Adrenal gland (tissue), 19 donors: ENCODE measurements at regions of chr1 and their contacts with region 1.

Region 1: DNA sequence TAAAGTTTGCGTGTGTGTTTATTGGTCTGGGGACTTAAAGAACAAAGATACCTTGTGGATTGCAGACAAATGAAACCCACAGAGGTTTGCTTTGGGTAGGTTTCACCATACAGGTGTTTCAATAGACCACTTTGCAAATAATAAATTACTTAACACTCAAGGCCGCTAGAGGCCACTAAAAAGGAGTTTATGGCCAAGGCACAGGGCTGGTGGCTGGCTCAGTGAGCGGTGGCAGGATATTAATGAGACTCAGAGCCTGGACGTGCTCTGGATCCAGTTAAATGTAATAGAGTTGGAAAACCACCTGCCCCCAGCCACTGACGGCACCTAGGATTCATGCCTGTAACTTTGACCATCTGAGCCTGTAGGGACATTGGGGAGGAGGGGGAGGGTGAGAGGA is 44.5 kb downstream of the LRRC38 start:
- DNase-seq: peak in 6 of 7 donors; percentile 27 to 65 (median 44)
- H3K4me3 ChIP-seq: no peak overlapping the region
- H3K27ac ChIP-seq: no peak overlapping the region
- H3K4me1 ChIP-seq: no peaks in the 10 kb centered on the region
- H3K27me3 ChIP-seq: no peaks in the 10 kb centered on the region
- CTCF ChIP-seq: peak in 4 of 6 experiments; percentile 28 to 43 (median 35)
- POLR2A ChIP-seq: no peak

Region 2: GRCh38 chr1:13543451-13544220 is 74.3 kb after region 1 on chr1:
- intact Hi-C with region 1: loop called in 1 of 2 experiments (anchors 10 kb)
- DNase-seq: peak; percentile 68 to 90 (median 83)
- H3K4me3 ChIP-seq: peak overlapping the region in 1 of 4 donors; percentile 33
- H3K27ac ChIP-seq: peak overlapping the region; percentile 71 to 95 (median 84)
- H3K4me1 ChIP-seq: peaks cover 3 to 13% of the 10 kb centered on the region in 2 donors
- H3K27me3 ChIP-seq: no peaks in the 10 kb centered on the region
- CTCF ChIP-seq: peak; percentile 71 to 86 (median 80)
- POLR2A ChIP-seq: no peak

Region 3: DNA sequence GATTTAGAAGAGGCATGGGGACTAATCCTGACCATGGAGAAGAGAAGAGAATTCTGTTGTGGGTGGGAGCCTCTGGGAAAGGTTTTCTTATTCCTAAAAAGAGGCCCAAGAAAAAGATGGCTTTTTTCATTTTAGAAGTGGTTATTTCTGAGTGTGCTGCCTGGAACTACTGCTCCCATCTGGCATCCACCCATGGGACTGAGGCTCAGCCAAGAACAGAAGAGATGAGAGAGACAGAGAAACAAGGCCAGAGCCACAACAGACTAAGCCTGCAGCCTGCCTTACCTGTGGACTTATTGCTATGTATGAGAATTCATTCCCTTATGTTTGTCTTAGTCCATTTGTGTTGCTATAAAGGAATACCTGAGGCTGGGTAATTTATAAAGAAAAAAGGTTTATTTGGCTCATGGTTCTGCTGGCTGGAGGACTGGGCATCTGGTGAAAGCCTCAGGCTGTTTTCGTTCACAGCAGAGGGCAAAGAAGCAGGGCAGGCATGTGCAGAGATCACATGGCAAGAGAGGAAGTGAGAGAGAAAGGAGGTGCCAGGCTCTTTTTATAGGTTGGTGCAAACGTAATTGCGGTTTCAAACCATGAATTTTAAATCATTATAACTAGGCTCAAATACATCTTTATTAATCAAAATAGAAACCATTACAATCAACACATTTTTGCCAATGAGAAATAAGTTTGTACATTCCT is 173.1 kb after region 1 on chr1:
- intact Hi-C with region 1: no loop called
- DNase-seq: no peak
- H3K4me3 ChIP-seq: no peak overlapping the region
- H3K27ac ChIP-seq: no peak overlapping the region
- H3K4me1 ChIP-seq: no peaks in the 10 kb centered on the region
- H3K27me3 ChIP-seq: no peaks in the 10 kb centered on the region
- CTCF ChIP-seq: no peak
- POLR2A ChIP-seq: no peak

Region 4: GRCh38 chr1:13662493-13662892 is 193.2 kb after region 1 on chr1:
- intact Hi-C with region 1: no loop called
- DNase-seq: peak in 3 of 7 donors; percentile 12 to 33 (median 26)
- H3K4me3 ChIP-seq: no peak overlapping the region
- H3K27ac ChIP-seq: no peak overlapping the region
- H3K4me1 ChIP-seq: no peaks in the 10 kb centered on the region
- H3K27me3 ChIP-seq: no peaks in the 10 kb centered on the region
- CTCF ChIP-seq: no peak
- POLR2A ChIP-seq: no peak

Region 5: GRCh38 chr1:13807213-13807612 is 337.9 kb after region 1 on chr1:
- intact Hi-C with region 1: no loop called
- DNase-seq: peak; percentile 35 to 81 (median 64)
- H3K4me3 ChIP-seq: no peak overlapping the region
- H3K27ac ChIP-seq: no peak overlapping the region
- H3K4me1 ChIP-seq: no peaks in the 10 kb centered on the region
- H3K27me3 ChIP-seq: no peaks in the 10 kb centered on the region
- CTCF ChIP-seq: peak; percentile 17 to 54 (median 46)
- POLR2A ChIP-seq: no peak

Region 6: DNA sequence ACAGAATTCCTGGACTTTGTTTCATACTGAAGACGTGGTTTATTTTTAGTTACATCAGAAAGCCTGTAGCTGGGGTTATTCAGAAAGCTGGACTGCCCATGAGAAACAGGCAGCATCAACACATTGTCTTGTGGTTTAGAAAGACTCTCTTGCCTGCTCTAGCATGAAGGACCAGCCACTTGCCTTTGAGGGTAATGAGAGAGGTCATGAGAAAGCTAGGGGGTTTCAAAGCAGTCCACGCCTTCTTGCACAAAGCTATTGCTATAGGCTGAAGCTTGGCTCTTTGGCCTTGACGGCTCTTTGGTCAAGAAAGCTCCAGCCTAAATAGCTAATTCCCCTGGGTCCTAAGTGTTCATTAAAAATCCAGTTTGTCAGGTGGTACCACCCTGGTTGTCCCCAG is 438.8 kb after region 1 on chr1:
- intact Hi-C with region 1: no loop called
- DNase-seq: no peak
- H3K4me3 ChIP-seq: no peak overlapping the region
- H3K27ac ChIP-seq: no peak overlapping the region
- H3K4me1 ChIP-seq: no peaks in the 10 kb centered on the region
- H3K27me3 ChIP-seq: no peaks in the 10 kb centered on the region
- CTCF ChIP-seq: no peak
- POLR2A ChIP-seq: no peak